ENCODE measurements at regions of chr18 and their contacts with region 1.

Region 1: GRCh38 chr18:68417166-68417799 is 297.6 kb downstream of the TMX3 start:
- DNase-seq: no peak
- H3K4me3 ChIP-seq: no peak overlapping the region
- H3K27ac ChIP-seq: no peak overlapping the region
- H3K4me1 ChIP-seq: no peaks in the 10 kb centered on the region
- H3K27me3 ChIP-seq: no peaks in the 10 kb centered on the region
- CTCF ChIP-seq: no peak

Region 2: DNA sequence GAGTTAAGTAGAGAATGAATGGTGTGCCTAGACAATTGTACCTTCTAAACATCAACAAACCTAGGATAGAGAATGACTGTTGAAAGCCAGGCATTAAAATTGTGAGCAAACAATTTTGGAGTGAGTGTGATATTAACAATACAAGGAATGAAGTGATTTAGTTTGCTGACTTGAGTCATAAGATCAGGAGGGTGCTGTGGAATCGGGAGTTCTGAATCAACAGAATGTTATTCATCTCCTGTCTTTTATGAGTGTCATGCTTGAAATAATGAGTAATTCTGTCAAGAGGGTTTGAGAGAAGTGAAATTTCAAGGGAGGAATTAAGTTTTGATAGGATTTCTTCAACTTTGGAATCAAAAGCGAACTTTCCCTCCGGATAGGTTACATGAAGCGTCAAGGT is 686.4 kb before region 1 on chr18:
- CTCF ChIA-PET with region 1: no interaction called
- POLR2A ChIA-PET with region 1: no interaction called
- intact Hi-C with region 1: no loop called
- DNase-seq: no peak
- H3K4me3 ChIP-seq: no peak overlapping the region
- H3K27ac ChIP-seq: no peak overlapping the region
- H3K4me1 ChIP-seq: no peaks in the 10 kb centered on the region
- H3K27me3 ChIP-seq: no peaks in the 10 kb centered on the region
- CTCF ChIP-seq: no peak

Region 3: DNA sequence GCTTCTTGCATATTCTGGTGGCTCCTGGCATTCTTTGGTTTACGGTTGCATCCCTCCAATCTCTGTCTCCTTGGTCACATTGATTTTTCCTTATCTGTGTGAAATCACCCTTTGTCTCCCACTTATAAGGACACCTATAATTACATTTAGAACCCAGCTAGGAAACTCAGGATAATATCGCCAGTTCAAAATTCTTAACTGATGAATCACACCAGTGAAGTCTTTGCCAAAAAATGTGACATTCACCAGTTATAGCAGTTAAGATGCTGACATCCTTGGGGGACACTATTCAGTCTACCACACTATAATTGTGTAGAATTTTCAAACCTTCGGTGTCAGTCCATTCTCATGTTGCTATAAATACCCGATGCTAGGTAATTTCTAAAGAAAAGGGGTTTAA is 22.6 kb before region 1 on chr18:
- CTCF ChIA-PET with region 1: no interaction called
- POLR2A ChIA-PET with region 1: interaction called, 10 read pairs
- intact Hi-C with region 1: no loop called
- DNase-seq: no peak
- H3K4me3 ChIP-seq: no peak overlapping the region
- H3K27ac ChIP-seq: no peak overlapping the region
- H3K4me1 ChIP-seq: no peaks in the 10 kb centered on the region
- H3K27me3 ChIP-seq: no peaks in the 10 kb centered on the region
- CTCF ChIP-seq: no peak